Psoas muscle (tissue), 8 donors: ENCODE measurements at regions of chr9 and their contacts with region 1.

Region 1: GRCh38 chr9:109440797-109441287 is 57.3 kb downstream of the PTPN3 start:
- DNase-seq: no peak
- ATAC-seq: peak; percentile 73 to 84 (median 79)
- H3K4me3 ChIP-seq: no peak overlapping the region
- H3K27ac ChIP-seq: peak overlapping the region; percentile 18
- H3K4me1 ChIP-seq: peaks cover 22% of the 10 kb centered on the region
- H3K27me3 ChIP-seq: no peaks in the 10 kb centered on the region
- CTCF ChIP-seq: peak; percentile 78

Region 2: DNA sequence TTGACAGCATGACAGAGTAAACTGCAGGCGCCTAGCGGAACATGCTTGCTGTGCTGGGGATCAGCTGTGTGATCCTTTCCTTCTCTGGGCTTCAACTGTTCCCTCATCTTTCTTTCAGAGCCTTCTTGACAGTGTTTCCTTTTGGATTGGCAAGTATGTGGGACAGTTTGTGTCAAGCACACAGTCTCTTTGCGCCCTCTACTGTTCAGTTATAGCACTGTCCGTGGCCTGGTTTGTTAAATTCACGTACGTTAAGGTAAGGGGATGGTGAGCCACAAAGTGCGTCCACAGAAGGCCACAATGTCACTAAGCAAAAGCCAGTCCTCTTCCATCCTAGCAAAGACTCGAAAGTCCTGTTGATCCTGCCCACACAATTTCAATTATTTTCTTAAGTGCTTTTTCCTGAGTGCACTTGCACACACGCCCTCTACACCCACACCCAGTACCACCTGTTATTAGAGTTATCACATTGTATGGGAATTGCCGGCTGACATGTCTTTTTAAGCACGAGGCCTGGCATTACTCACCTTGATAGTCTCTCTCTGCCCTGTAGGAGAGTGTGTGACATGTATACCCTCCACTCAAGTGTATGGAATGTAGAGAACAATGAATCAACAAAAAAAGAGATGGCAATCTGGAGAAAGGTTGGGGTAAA is 79.8 kb after region 1 on chr9:
- intact Hi-C with region 1: loop called (anchors 2 to 5 kb)
- DNase-seq: no peak
- ATAC-seq: peak; percentile 94 to 97 (median 95)
- H3K4me3 ChIP-seq: no peak overlapping the region
- H3K27ac ChIP-seq: no peak overlapping the region
- H3K4me1 ChIP-seq: peaks cover 4% of the 10 kb centered on the region
- H3K27me3 ChIP-seq: no peaks in the 10 kb centered on the region
- CTCF ChIP-seq: peak; percentile 90